ENCODE measurements at regions of chr5 and their contacts with region 1.

Region 1: GRCh38 chr5:150175076-150175935 is 8.7 kb downstream of the CDX1 start:
- DNase-seq: peak; percentile 24 to 46 (median 35)
- H3K4me3 ChIP-seq: no peak overlapping the region
- H3K27ac ChIP-seq: no peak overlapping the region
- H3K4me1 ChIP-seq: peaks cover 0 to 2% (median 0%) of the 10 kb centered on the region in 4 experiments
- H3K27me3 ChIP-seq: peaks cover 0 to 10% (median 1%) of the 10 kb centered on the region in 5 experiments

Region 2: GRCh38 chr5:149932445-149933350 is 242.6 kb before region 1 on chr5:
- CTCF ChIA-PET with region 1: no interaction called
- POLR2A ChIA-PET with region 1: no interaction called
- DNase-seq: peak in 1 of 3 donors; percentile 38
- H3K4me3 ChIP-seq: peak overlapping the region in 4 of 7 experiments; percentile 10 to 63 (median 35)
- H3K27ac ChIP-seq: no peak overlapping the region
- H3K4me1 ChIP-seq: no peaks in the 10 kb centered on the region
- H3K27me3 ChIP-seq: peaks cover 0 to 6% (median 0%) of the 10 kb centered on the region in 5 experiments

Region 3: DNA sequence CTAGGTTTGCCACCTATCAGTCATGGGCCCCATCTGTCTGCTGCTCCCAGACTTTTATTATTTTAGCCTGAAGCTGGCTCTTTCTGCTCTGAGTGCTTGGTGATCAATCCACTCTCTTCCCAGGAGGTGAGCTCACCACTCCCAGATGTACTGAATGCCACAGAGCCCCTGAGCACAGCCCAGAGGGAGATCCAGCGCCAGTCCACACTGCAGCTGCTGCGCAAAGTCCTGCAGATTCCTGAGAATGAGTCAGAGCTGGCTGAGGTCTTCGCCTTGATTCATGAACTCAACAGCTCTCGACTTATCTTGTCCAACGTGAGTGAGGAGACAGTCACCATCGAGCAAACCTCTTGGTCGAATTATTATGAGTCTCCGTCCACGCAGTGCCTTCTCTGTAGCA is 138.8 kb before region 1 on chr5:
- CTCF ChIA-PET with region 1: no interaction called
- POLR2A ChIA-PET with region 1: no interaction called
- DNase-seq: no peak
- H3K4me3 ChIP-seq: no peak overlapping the region
- H3K27ac ChIP-seq: no peak overlapping the region
- H3K4me1 ChIP-seq: no peaks in the 10 kb centered on the region
- H3K27me3 ChIP-seq: no peaks in the 10 kb centered on the region

Region 4: GRCh38 chr5:150137168-150137957 is 37.9 kb before region 1 on chr5:
- CTCF ChIA-PET with region 1: interaction called, 10 read pairs
- POLR2A ChIA-PET with region 1: no interaction called
- DNase-seq: no peak
- H3K4me3 ChIP-seq: no peak overlapping the region
- H3K27ac ChIP-seq: no peak overlapping the region
- H3K4me1 ChIP-seq: peaks cover 0 to 10% (median under 1%) of the 10 kb centered on the region in 4 experiments
- H3K27me3 ChIP-seq: no peaks in the 10 kb centered on the region

Region 5: GRCh38 chr5:150161242-150162141 is 13.8 kb before region 1 on chr5:
- CTCF ChIA-PET with region 1: interaction called, 11 read pairs
- POLR2A ChIA-PET with region 1: no interaction called
- DNase-seq: peak; percentile 48 to 69 (median 54)
- H3K4me3 ChIP-seq: no peak overlapping the region
- H3K27ac ChIP-seq: no peak overlapping the region
- H3K4me1 ChIP-seq: peaks cover 0 to 24% (median 4%) of the 10 kb centered on the region in 4 experiments
- H3K27me3 ChIP-seq: peaks cover 3 to 14% (median 8%) of the 10 kb centered on the region in 5 experiments

Region 6: GRCh38 chr5:150186897-150187296 is 11.6 kb after region 1 on chr5:
- CTCF ChIA-PET with region 1: interaction called, 10 read pairs
- POLR2A ChIA-PET with region 1: no interaction called
- DNase-seq: no peak
- H3K4me3 ChIP-seq: no peak overlapping the region
- H3K27ac ChIP-seq: no peak overlapping the region
- H3K4me1 ChIP-seq: peaks cover 0 to 7% (median 2%) of the 10 kb centered on the region in 4 experiments
- H3K27me3 ChIP-seq: peaks cover 0 to 39% (median 24%) of the 10 kb centered on the region in 5 experiments

Region 7: DNA sequence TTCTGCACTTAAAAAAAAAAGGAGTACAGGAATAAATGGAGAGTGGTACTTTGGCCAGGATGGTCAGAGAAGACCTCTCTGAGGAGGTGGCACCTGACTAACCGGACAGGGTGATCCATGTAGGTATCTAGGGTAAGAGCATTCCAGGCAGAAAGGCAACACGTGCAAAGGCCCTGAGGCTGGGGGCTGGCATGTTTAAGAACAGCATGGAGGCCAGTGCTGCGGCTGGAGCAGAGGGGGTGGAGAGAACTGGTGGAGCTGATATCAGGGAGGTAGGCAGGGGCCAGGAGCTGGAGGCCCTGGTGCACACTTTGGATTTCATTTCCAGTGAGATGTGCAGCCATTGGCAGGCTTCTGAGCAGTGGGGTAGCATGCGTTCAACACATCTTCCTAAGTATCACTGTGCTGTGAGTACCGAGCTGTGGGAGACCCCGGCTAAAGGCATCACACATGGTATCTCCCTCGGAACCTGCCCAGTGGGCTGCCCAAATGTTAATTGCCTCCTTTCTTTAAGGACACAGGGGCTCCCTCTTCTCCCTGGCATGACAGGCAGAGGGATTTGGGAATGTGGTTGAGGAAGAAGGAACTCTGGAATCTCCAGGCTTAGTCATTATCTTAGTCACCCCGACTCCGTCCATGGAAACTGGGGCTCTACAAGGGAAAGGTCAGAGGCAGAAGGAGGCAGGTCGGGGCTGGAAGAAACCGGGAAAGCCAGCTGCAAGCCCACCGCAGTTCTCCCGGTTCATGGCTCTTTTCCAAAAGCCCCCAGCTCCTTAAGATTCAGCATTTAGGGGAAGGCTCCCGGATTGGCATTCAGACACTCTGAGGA is 33.1 kb after region 1 on chr5:
- CTCF ChIA-PET with region 1: interaction called, 10 read pairs
- POLR2A ChIA-PET with region 1: no interaction called
- DNase-seq: no peak
- H3K4me3 ChIP-seq: peak overlapping the region in 3 of 7 experiments; percentile 43 to 58 (median 48)
- H3K27ac ChIP-seq: no peak overlapping the region
- H3K4me1 ChIP-seq: peaks cover 5 to 27% (median 26%) of the 10 kb centered on the region in 4 experiments
- H3K27me3 ChIP-seq: peaks cover 0 to 13% (median 5%) of the 10 kb centered on the region in 5 experiments